ENCODE measurements at regions of chr11 and their contacts with region 1.

Region 1: DNA sequence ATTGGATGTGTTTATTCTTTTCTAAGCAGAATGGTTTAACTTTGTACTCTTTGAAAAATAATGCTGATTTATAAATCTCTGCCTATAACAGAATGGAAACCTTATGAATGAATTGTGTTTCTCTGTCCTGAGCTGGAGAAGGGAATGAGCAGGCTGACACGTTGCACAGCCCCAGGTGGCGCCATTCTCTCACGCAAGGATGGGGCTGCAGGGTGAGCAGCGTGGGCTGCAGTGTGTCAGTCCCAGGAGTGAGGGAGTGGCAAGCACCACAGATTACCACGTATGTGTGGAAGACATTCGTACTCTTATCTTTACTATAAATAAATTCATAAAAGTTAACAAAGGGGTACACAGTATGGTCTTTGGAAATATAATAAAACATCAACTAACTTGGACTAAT is 33.4 kb downstream of the FDX1 start:
- H3K4me3 Mint-ChIP-seq: no peak overlapping the region
- H3K27ac Mint-ChIP-seq: no peak overlapping the region
- H3K4me1 Mint-ChIP-seq: peaks cover 5% of the 10 kb centered on the region
- H3K27me3 Mint-ChIP-seq: no peaks in the 10 kb centered on the region

Region 2: GRCh38 chr11:110490886-110491285 is 27.7 kb after region 1 on chr11:
- intact Hi-C with region 1: no loop called
- H3K4me3 Mint-ChIP-seq: no peak overlapping the region
- H3K27ac Mint-ChIP-seq: peak overlapping the region; percentile 70
- H3K4me1 Mint-ChIP-seq: peaks cover 44% of the 10 kb centered on the region
- H3K27me3 Mint-ChIP-seq: no peaks in the 10 kb centered on the region

Region 3: GRCh38 chr11:111230122-111230465 is 766.9 kb after region 1 on chr11:
- intact Hi-C with region 1: loop called (anchors 2 kb)
- H3K4me3 Mint-ChIP-seq: no peak overlapping the region
- H3K27ac Mint-ChIP-seq: no peak overlapping the region
- H3K4me1 Mint-ChIP-seq: peaks cover 16% of the 10 kb centered on the region
- H3K27me3 Mint-ChIP-seq: peaks cover 14% of the 10 kb centered on the region